PC-9 (cell line): ENCODE measurements at regions of chr9 and their contacts with region 1.

Region 1: DNA sequence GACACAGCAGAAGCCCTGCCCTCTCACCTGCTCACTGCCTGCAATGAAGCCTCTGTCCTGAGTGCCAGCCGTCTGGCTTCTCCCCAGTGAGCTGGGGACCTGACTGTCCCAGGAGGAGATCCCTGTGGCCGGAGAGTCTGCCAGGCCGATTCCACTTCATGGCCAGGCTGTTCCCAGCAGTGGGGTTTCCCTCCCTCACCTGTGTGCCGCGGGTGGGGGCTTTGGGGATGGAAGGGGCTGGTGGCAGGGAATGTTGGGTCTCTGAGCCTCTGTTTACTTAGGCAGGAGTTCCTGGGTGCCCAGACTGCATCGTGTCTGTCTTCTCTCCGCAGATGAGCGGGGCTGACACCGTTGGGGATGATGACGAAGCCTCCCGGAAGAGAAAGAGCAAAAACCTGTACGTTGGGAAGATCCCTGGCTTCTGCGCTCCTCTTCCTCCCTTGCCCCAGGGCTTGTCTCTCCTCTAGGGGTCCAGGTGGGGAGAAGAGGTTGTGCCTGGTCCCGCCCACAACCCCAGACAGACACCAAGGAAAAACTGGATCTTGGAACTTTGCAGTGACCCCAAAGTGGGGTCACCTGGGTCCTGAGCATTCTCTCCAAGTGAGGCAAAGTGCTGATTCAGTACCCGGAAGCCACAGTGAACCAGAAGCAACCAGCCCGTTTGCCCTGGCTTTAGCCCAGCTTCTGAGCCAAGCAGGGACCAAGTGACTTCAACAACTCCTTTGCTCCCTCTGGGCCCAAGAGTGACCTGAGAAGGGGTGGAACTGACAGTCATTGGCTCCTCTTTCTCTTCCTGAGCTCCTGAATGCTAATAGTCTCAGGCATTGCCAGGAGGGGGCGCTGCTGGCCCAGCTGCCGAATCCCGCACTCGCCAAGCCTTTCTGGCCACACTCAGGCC is 127.7 kb downstream of the RGS3 start:
- DNase-seq: peak in 1 of 2 experiments; percentile 79
- H3K4me3 ChIP-seq: no peak overlapping the region
- H3K27ac ChIP-seq: no peak overlapping the region
- H3K4me1 ChIP-seq: no peaks in the 10 kb centered on the region
- H3K27me3 ChIP-seq: no peaks in the 10 kb centered on the region
- CTCF ChIP-seq: peak; percentile 95

Region 2: GRCh38 chr9:112921549-112921948 is 669.7 kb before region 1 on chr9:
- CTCF ChIA-PET with region 1: interaction called, 16 read pairs
- POLR2A ChIA-PET with region 1: no interaction called
- intact Hi-C with region 1: no loop called
- DNase-seq: peak in 1 of 2 experiments; percentile 50
- H3K4me3 ChIP-seq: no peak overlapping the region
- H3K27ac ChIP-seq: no peak overlapping the region
- H3K4me1 ChIP-seq: peaks cover 28% of the 10 kb centered on the region
- H3K27me3 ChIP-seq: no peaks in the 10 kb centered on the region
- CTCF ChIP-seq: peak; percentile 57; the same call in 1 of the 2 replicates

Region 3: GRCh38 chr9:113446323-113446740 is 144.9 kb before region 1 on chr9:
- CTCF ChIA-PET with region 1: interaction called, 6 read pairs
- POLR2A ChIA-PET with region 1: interaction called, 3 read pairs
- intact Hi-C with region 1: loop called (anchors 2 kb)
- DNase-seq: no peak
- H3K4me3 ChIP-seq: no peak overlapping the region
- H3K27ac ChIP-seq: no peak overlapping the region
- H3K4me1 ChIP-seq: no peaks in the 10 kb centered on the region
- H3K27me3 ChIP-seq: no peaks in the 10 kb centered on the region
- CTCF ChIP-seq: peak; percentile 80

Region 4: DNA sequence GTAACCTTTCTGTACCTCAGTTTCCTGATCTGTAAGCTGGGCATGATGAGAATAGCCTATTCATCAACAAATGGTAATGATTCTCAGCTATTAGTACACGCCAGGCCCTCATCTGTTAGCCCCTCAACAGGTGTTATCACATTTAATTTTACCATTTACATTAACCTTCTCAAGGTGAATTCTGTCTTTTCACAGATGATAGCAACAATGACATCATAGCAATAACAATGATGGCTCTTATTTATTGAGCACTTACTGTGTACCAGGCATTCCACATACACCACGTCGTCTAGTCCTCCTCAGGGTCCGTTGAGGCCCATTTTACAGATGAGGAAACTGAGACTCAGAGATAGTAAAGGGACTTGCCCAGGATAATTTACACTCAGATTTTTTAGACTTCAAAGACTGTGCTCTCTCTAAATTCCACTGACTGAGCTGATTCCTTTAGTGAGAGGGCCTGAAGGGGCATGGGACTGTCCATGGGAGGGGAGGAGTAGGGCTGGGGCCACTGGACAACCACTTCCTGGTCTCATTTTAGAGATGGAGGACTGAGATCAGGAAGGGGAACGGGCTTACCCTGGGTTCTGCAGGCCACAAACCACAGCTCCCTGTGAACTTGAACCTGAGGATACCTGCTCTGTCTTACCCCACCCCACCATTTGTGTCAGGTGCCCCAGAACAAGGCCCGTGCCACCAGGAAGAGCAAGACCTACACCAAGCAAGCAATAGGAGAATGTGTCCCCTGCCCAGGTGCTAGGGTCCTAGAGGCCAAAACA is 31.4 kb before region 1 on chr9:
- CTCF ChIA-PET with region 1: no interaction called
- POLR2A ChIA-PET with region 1: no interaction called
- intact Hi-C with region 1: no loop called
- DNase-seq: no peak
- H3K4me3 ChIP-seq: no peak overlapping the region
- H3K27ac ChIP-seq: no peak overlapping the region
- H3K4me1 ChIP-seq: peaks cover 10% of the 10 kb centered on the region
- H3K27me3 ChIP-seq: no peaks in the 10 kb centered on the region
- CTCF ChIP-seq: no peak

Region 5: GRCh38 chr9:114011313-114011712 is 420.1 kb after region 1 on chr9:
- CTCF ChIA-PET with region 1: no interaction called
- POLR2A ChIA-PET with region 1: no interaction called
- intact Hi-C with region 1: loop called (anchors 5 kb)
- DNase-seq: no peak
- H3K4me3 ChIP-seq: no peak overlapping the region
- H3K27ac ChIP-seq: no peak overlapping the region
- H3K4me1 ChIP-seq: no peaks in the 10 kb centered on the region
- H3K27me3 ChIP-seq: peaks cover 77% of the 10 kb centered on the region
- CTCF ChIP-seq: no peak

Region 6: DNA sequence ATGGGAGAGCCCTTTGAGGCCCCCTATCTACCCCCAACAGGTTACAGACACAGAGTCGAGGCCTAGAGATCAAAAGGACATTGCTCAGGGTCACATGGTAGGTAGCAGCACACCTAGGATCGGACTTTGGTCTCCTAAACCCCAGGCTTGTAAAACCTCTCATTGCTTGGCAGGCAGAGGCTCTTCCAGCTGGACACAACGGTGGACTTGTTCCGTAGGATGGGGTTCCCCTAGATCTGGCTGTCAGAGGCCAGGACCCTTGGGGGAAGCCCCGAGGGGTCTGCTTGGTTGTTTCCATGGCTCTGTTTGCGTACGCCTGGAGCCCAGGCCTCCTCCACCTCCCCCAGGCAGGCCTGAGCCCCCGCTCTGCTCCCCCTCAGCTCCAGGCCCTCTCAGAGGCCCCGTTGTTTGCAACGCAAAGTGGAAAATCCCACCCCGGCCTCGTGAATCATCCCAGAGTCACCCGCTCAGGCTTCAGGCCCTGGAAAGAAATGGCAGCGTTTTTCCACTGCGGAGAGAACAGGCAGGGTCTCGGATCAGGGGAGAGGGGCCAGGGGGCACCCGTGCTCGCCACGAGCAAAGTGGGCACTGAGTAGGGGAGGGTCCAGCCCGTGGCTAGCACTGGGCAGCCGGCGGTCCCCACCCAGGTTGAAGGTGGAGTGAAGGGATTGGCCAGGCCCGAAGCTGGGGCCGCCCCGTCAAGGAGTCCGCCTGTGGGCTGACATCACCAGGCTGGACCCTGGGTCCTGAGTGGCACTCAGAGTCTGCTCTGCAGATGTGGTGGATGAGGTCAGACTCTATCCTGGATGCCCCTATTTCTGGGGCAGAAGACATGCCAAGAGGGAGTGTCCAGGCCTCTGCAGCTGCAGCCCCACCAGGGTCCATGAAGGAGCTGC is 583.9 kb after region 1 on chr9:
- CTCF ChIA-PET with region 1: no interaction called
- POLR2A ChIA-PET with region 1: no interaction called
- intact Hi-C with region 1: no loop called
- DNase-seq: no peak
- H3K4me3 ChIP-seq: no peak overlapping the region
- H3K27ac ChIP-seq: no peak overlapping the region
- H3K4me1 ChIP-seq: no peaks in the 10 kb centered on the region
- H3K27me3 ChIP-seq: peaks cover 6% of the 10 kb centered on the region; the same call in 1 of the 2 replicates
- CTCF ChIP-seq: no peak